ENCODE measurements at regions of chr16 and their contacts with region 1.

Region 1: DNA sequence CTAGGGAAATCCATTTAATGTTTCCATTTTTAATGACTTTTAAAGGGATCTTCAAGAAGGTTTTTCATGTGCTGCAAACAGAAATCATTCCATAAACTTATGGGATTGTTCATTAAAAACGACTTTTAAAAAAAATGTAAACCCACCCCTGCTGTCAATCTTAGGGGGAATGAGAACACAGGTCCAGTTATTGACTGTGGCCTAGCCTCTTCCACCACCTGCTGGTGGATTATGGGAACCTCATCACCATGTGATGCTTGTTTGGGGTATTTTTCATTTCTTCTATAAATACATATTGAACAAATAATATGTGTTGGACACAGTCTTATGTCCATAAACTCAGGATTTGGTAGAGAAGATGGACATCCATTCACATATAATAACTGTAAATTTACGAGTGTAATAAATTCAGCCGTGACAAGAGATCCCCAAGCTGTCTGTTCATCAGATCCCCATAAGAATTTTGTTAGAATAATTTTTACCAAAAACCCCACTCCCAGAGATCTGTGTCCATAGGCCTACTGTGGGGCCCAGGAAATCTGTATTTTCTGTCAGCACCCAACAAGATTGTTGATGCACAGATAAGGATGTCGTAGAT is 42.0 kb upstream of the TMC5 start:
- DNase-seq: peak; percentile 31 to 54 (median 45)
- ATAC-seq: peak; percentile 53
- H3K4me3 ChIP-seq: no peak overlapping the region
- H3K27ac ChIP-seq: no peak overlapping the region
- H3K4me1 ChIP-seq: peaks cover 6% of the 10 kb centered on the region
- H3K27me3 ChIP-seq: no peaks in the 10 kb centered on the region
- CTCF ChIP-seq: peak; percentile 59 to 87 (median 83)
- POLR2A ChIP-seq: no peak

Region 2: DNA sequence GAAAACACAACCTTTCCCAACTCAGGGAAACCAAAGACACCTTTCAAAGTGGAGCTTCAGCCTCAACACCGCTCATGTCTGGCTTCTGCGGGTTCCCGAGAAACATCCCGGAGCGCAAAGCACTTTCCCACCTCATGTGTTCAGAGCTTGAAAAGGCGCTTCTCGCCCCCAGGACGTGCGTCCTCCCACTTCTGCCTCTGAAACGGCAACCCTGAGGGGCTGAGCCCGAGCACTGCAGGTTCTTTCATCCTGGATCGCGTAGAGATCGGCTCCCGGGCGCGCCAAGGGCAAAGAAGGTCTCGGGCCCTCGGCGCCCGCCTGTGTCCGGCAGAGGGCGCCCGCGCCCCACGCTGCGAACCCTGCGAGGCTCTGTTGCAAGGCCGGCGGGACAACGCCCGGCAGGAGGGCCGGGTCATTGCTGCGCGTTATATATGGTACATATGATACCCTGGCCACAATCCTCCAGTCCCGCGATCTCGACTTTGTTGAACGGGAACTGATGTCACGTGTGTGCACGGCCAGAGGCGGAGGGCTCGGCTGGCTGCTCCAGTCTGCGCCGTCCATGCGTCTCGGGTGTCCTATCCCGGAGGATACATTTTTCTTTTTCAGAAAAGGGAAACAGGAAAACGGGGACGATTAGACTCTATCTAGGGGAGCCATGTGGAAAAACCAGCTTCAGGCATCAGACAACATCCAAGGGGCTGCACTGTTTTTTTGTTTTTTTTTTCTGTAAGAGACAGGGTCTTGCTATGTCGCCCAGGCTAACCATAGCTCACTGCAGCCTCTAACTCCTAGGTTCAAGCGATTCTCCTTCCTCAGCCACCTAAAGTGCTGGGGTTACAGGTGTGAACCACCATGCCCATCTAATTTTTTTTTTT is 289.1 kb before region 1 on chr16:
- intact Hi-C with region 1: loop called (anchors 5 kb)
- DNase-seq: peak; percentile 82 to 87 (median 84)
- ATAC-seq: peak; percentile 97
- H3K4me3 ChIP-seq: no peak overlapping the region
- H3K27ac ChIP-seq: no peak overlapping the region
- H3K4me1 ChIP-seq: peaks cover 15% of the 10 kb centered on the region
- H3K27me3 ChIP-seq: no peaks in the 10 kb centered on the region
- CTCF ChIP-seq: peak; percentile 93 to 100 (median 98)
- POLR2A ChIP-seq: peak in 1 of 3 donors; percentile 27

Region 3: GRCh38 chr16:19167710-19168370 is 207.8 kb before region 1 on chr16 and contains the start of gene SYT17:
- intact Hi-C with region 1: loop called (anchors 10 kb)
- DNase-seq: peak; percentile 59 to 76 (median 70)
- ATAC-seq: peak; percentile 91
- H3K4me3 ChIP-seq: peak within 1 kb of the TSS; percentile 13 to 53
- H3K27ac ChIP-seq: peak within 1 kb of the TSS in 1 of 4 donors; percentile 25
- H3K4me1 ChIP-seq: peaks cover 19% of the 10 kb centered on the region
- H3K27me3 ChIP-seq: no peaks in the 10 kb centered on the region
- CTCF ChIP-seq: peak; percentile 31 to 84 (median 53)
- POLR2A ChIP-seq: no peak
- total RNA-seq, gene SYT17: 3.9 to 9.2 TPM